ENCODE measurements at regions of chr15 and their contacts with region 1.

Region 1: DNA sequence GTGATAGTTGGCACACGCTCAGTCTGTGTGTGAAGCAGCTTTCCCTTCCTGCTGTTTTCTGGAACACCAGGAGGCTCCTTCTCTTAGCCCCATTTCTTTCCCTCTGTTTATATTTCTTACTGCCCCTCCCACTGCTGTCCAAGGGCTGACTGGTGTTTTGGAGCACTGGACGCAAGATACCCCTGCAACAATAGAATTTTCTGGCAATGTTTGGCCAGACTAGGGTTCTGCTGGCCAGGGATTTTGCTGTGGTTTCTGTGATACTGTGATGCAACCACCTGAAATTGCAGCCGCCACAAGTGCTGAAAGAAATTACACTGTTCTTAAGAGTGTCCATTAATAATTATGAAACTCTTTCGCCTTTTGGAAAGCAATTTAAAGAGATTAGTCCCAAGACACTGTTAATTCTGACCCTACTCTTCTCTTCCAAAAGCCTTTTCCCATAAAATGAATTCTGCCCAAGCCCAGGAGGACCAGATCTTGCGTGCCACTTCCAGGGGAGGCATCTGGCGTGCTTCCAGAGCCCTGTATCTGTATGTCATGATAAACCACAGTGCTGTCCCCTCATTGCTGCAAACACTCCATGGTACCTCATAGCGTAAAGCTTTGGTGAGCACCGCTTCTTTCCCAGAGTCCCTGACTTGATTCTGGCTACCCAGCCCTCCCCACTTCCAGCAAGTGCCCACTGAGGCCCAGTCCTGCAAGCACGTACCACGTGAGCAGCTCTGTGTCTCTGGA is 159.4 kb upstream of the CHRM5 start:
- DNase-seq: no peak
- ATAC-seq: no peak
- H3K4me3 ChIP-seq: no peak overlapping the region
- H3K27ac ChIP-seq: no peak overlapping the region
- H3K4me1 ChIP-seq: no peaks in the 10 kb centered on the region
- H3K27me3 ChIP-seq: no peaks in the 10 kb centered on the region

Region 2: DNA sequence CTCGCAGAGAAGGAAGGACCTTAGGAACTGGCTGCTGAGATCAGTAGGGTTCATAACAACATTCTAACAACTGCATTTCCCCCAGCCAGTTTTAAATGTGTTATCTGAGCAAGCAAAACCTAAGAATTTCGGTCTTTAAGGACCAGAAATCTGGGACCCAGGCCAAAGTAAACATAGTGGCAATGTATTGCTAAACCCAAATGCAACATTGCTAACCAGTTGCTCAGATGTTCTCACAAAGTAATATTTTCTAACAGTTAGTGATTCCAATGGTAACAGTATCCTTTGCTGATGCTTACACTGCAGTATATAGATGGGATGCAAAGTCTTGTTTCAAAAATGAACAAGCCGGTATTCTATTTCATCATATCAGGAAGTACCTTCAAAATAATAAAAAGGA is 243.8 kb before region 1 on chr15:
- intact Hi-C with region 1: no loop called
- DNase-seq: no peak
- ATAC-seq: no peak
- H3K4me3 ChIP-seq: no peak overlapping the region
- H3K27ac ChIP-seq: no peak overlapping the region
- H3K4me1 ChIP-seq: peaks cover 0 to 5% of the 10 kb centered on the region in 2 donors
- H3K27me3 ChIP-seq: no peaks in the 10 kb centered on the region

Region 3: GRCh38 chr15:33780011-33780768 is 28.7 kb before region 1 on chr15:
- intact Hi-C with region 1: no loop called
- DNase-seq: no peak
- ATAC-seq: no peak
- H3K4me3 ChIP-seq: no peak overlapping the region
- H3K27ac ChIP-seq: no peak overlapping the region
- H3K4me1 ChIP-seq: no peaks in the 10 kb centered on the region
- H3K27me3 ChIP-seq: no peaks in the 10 kb centered on the region

Region 4: GRCh38 chr15:33860754-33861153 is 51.9 kb after region 1 on chr15:
- intact Hi-C with region 1: loop called in 1 of 2 experiments (anchors 10 kb)
- DNase-seq: no peak
- ATAC-seq: no peak
- H3K4me3 ChIP-seq: no peak overlapping the region
- H3K27ac ChIP-seq: no peak overlapping the region
- H3K4me1 ChIP-seq: peaks cover 0 to 2% of the 10 kb centered on the region in 2 donors
- H3K27me3 ChIP-seq: no peaks in the 10 kb centered on the region

Measured in aorta (tissue), 5 donors.